OCI-LY7 (cell line): ENCODE measurements at regions of chr1 and their contacts with region 1.

Region 1: DNA sequence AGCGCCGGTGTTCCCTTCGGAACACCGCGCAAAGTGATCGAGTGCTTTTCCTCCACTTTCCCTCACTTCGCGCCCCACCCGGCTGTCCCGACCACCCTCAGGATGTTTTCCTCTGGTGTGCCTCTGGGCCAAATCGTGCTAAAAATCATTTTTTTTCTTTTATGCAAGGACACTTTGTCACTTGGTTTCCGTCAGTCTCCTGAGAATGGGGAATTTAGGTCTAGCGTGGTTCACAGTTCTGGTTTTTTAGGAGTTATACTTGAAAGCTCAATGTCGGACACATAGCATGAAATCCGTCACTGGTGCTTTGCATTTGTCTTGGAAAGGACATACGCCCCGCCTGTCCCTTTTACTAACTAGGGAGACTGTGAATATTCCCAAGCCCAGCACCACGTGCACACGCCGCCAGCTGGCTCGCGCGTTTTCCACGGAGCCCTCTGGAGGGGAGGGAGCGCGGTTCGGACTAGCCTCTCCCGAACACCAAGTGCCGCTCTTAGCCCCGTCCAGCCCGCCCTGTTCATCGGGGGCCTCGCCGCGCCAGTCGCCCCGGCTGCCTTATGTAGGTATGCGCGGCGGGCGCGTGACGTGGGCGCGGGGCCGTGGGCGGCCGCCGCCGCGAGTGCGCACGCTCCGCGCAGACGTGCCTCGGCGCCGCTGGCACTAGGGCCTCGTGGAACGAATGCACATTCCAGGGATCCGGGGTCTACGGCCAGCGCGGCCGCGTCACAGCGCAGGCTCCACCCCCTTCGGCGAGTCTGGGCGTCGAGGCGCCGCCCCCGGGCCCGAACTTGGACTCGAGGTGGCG is 572 bp upstream of the IRF2BP2 start:
- DNase-seq: peak; percentile 79
- H3K4me3 ChIP-seq: peak overlapping the region; percentile 70
- H3K27ac ChIP-seq: peak overlapping the region; percentile 80
- H3K4me1 ChIP-seq: peaks cover 63% of the 10 kb centered on the region
- CTCF ChIP-seq: no peak

Region 2: DNA sequence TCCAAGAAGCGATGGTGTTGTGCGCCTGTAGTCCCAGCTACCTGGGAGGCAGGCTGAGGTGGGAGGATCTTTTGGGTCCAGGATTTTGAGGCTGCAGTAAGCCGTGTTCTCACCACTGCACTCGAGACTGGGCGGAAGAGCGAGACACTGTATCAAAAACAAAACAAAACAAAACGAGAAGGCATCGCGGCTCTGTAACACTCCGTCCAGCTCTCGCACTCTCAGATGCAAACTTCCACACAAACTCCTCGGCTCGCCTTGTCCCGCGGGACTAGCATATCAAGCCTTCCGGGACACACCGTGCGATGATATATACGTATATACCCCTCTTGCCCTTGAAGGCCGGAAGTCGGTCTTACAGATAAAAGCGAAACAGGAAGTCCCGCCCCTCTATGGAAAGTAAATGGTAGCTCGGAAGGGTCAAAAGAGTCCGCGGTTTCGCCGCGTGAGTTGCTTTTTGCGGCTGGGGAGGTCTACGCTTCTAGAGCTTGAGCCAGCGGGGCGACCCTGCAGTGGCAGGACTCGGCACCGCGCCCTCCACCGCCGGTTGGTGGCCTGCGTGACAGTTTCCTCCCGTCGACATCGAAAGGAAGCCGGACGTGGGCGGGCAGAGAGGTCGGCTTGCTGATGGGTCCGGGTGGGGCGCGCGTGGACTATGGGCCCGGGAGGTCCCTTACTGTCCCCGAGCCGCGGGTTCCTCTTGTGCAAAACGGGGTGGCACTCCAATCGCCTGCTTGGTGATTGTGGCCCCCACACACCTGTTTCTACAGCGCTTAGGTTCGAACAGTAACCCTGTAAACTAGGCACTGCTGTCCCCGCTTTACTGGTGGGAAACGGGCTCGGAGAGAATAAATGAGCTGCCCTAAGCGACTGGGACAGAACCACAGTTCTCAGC is 237.2 kb before region 1 on chr1 and contains the start of gene COA6:
- CTCF ChIA-PET with region 1: no interaction called
- POLR2A ChIA-PET with region 1: no interaction called
- intact Hi-C with region 1: loop called (anchors 5 kb)
- DNase-seq: peak; percentile 99
- H3K4me3 ChIP-seq: peak within 1 kb of the TSS; percentile 92
- H3K27ac ChIP-seq: peak within 1 kb of the TSS; percentile 95
- H3K4me1 ChIP-seq: peaks cover 35% of the 10 kb centered on the region
- CTCF ChIP-seq: peak; percentile 31; the same call in 1 of the 2 replicates
- total RNA-seq, gene COA6: 40.1 and 45.5 TPM in 2 replicates

Region 3: DNA sequence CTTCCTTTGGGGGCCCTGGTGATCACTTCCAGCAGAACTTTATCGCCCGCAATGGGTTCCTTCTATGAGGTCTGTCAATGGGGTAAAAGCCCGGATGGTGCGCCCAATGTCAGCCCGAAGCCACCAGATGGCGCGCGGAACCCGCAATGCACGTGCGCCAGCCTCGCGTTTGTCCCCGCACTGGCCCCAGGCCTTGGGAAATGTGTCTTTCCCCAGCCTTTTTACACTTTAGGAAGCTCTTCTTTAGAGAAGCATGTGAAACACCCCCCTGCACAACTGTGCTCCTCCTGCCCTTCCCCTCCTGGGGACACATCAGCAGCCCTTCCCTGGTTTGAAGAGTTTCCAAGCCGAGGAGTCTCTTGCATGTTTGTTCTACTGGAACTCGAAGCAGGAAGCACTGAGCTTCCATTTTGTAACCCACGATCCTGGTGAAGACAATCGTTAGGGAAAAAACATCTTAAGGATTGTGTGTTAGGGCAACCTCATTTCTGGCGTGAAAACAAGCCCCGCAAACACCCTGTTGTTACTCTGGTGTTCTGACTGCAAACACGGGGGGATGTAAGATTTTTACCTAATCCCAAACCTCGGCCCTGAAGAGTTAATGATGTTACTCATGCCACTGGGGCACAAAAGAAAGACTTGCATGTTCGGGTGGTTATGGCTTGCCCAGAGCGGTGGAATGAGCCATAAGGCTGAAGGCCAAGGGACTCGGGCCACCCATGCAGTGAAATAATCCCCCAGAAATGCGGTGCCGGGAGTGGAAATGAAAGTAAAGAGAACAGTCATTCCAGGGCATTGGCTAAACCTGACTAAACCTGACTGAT is 111.2 kb before region 1 on chr1:
- CTCF ChIA-PET with region 1: interaction called, 3 read pairs
- POLR2A ChIA-PET with region 1: interaction called, 16 read pairs
- intact Hi-C with region 1: loop called (anchors 1 kb)
- DNase-seq: peak; percentile 88
- H3K4me3 ChIP-seq: no peak overlapping the region
- H3K27ac ChIP-seq: no peak overlapping the region
- H3K4me1 ChIP-seq: peaks cover 41% of the 10 kb centered on the region
- CTCF ChIP-seq: peak; percentile 97

Region 4: DNA sequence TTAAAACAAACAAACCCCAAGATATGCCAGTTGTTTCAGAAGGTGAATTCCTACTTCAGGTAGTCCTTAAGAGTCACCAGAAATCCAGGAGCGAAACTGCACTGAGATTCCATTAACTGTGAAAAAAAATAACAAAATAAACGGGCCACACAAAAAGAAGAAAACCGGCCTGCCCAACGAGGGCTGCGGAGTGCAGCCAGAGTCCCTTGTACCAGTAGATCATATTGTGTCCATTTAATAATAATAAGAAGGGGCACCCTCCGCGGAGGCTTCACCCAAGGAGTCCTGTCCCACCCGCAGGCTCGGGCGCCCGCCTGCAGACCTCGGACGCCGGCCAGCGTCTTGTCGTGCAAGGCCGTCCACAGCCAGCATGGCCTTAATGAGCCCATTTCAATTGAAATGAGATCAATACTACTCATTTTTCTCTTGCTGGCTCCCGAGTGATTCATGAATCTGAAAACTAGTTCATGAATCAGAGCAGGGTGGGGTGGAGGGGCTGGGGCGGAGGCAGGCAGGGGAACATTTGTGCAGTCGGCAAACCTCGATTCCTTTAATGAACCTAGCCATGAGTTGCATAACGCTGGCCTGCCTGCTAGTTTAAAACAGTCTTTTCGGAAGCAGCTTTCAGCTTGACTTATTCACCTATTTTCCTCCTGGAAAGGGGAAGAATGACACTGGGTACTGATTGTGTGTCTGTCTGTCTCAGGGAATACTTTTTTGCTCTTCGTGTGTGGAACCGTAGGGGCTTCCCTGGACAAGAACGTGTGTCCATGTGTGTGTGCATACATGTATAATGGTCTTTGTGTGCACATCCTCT is 112.6 kb after region 1 on chr1:
- CTCF ChIA-PET with region 1: interaction called, 4 read pairs
- POLR2A ChIA-PET with region 1: interaction called, 39 read pairs
- intact Hi-C with region 1: loop called (anchors 2 kb)
- DNase-seq: peak; percentile 10
- H3K4me3 ChIP-seq: peak overlapping the region; percentile 27
- H3K27ac ChIP-seq: peak overlapping the region; percentile 65
- H3K4me1 ChIP-seq: peaks cover 50% of the 10 kb centered on the region
- CTCF ChIP-seq: no peak

Region 5: DNA sequence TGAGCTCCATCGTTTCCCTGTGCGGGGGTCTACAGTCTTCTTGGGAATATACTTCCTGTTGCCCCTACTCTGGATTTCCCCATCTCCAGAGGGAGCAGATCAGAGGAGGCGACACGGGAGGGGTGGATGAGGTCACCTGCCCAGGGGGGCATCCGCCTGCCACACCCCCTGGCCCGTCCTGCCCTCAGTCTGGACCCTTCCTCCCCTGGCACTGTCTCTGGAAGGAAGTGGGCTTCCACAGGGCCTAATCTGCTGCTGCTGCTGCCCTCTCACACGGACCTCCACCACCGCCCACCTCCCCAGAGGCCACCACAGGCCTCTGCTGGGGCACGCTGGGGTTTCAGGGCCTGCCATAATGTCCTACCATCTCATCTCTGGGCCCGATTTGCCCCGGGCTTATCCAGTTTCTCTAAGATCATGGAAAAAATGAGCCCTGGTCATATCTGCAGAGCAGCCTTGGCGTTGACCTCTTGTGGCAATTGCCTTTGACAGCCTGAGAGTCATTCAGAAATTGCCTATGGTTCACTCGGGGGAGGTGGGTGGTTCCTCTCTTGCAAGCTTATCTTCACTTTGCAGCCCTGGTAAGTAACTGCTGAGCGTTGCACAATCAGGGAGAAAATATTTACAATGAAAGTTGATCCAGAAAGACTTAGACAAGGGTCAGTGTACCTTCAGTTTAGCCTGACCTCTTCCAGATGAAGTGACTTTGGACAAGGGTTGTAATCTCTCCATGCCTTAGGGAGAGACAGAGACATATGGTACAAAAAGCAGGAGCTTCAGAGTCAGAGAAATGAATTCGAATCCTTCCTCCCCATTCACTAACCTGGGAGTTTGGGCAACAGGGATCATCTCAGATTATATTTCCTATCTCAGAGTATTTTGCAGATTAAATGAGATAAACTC is 265.7 kb after region 1 on chr1:
- CTCF ChIA-PET with region 1: no interaction called
- POLR2A ChIA-PET with region 1: no interaction called
- intact Hi-C with region 1: loop called (anchors 10 kb)
- DNase-seq: no peak
- H3K4me3 ChIP-seq: no peak overlapping the region
- H3K27ac ChIP-seq: no peak overlapping the region
- H3K4me1 ChIP-seq: peaks cover 15% of the 10 kb centered on the region
- CTCF ChIP-seq: no peak

Region 6: GRCh38 chr1:235328357-235329138 is 718.0 kb after region 1 on chr1 and contains the start of gene GGPS1:
- CTCF ChIA-PET with region 1: no interaction called
- POLR2A ChIA-PET with region 1: no interaction called
- intact Hi-C with region 1: loop called (anchors 5 kb)
- DNase-seq: peak; percentile 100
- H3K4me3 ChIP-seq: peak within 1 kb of the TSS; percentile 96
- H3K27ac ChIP-seq: peak within 1 kb of the TSS; percentile 91
- H3K4me1 ChIP-seq: peaks cover 44% of the 10 kb centered on the region
- CTCF ChIP-seq: no peak
- total RNA-seq, gene GGPS1: 8.0 and 21.9 TPM in 2 replicates